Mucosa of descending colon (tissue), 3 donors: ENCODE measurements at regions of chr19 and their contacts with region 1.

Region 1: DNA sequence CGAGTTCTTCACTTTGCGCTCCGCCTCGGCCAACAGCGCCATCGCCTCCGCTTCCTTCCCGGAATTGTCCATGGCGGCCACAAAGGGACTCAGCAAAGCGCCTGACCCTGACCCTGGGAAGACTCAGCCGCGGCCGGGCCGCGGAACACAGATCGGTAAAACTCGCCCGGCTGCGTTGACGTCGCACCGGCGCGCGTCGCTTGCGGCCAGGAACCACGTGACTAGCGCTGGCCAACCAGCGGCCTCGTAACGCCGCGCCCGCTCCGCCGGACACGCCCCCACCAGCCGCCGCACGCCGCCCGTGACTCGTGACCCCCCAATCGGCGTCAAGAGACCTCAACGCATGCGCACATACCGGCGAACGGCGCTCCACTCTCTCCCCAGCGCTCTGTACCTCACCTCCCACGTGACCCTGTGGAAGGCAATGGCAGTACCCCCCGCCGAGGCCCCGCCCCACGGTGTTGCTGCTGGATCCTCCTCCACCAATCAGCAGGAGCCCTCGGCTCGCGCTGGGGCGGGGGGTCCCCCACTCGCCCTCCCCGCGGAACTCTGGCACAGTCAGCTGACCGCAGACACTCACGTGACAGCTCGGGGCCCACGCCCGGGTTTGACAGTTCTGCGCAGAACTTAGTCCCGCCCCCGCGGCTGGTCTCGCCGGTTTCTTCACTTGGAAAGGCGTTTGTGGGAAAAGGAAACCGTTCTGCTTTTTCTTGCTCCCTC is at the start of gene NAPA:
- DNase-seq: peak; percentile 100
- ATAC-seq: peak; percentile 94
- H3K4me3 ChIP-seq: peak within 1 kb of the TSS; percentile 92
- H3K4me1 ChIP-seq: peaks cover 30% of the 10 kb centered on the region
- CTCF ChIP-seq: no peak
- total RNA-seq, gene NAPA: 109 to 145 (median 124) TPM

Region 2: GRCh38 chr19:47436712-47437401 is 78.2 kb before region 1 on chr19:
- intact Hi-C with region 1: no loop called
- DNase-seq: peak; percentile 77 to 92 (median 86)
- ATAC-seq: peak; percentile 98
- H3K4me3 ChIP-seq: no peak overlapping the region
- H3K4me1 ChIP-seq: no peaks in the 10 kb centered on the region
- CTCF ChIP-seq: peak; percentile 65

Region 3: GRCh38 chr19:47600246-47601179 is 85.5 kb after region 1 on chr19:
- intact Hi-C with region 1: loop called in 1 of 2 experiments (anchors 10 kb)
- DNase-seq: peak; percentile 100
- ATAC-seq: peak; percentile 97
- H3K4me3 ChIP-seq: peak overlapping the region; percentile 14
- H3K4me1 ChIP-seq: peaks cover 15% of the 10 kb centered on the region
- CTCF ChIP-seq: no peak

Region 4: DNA sequence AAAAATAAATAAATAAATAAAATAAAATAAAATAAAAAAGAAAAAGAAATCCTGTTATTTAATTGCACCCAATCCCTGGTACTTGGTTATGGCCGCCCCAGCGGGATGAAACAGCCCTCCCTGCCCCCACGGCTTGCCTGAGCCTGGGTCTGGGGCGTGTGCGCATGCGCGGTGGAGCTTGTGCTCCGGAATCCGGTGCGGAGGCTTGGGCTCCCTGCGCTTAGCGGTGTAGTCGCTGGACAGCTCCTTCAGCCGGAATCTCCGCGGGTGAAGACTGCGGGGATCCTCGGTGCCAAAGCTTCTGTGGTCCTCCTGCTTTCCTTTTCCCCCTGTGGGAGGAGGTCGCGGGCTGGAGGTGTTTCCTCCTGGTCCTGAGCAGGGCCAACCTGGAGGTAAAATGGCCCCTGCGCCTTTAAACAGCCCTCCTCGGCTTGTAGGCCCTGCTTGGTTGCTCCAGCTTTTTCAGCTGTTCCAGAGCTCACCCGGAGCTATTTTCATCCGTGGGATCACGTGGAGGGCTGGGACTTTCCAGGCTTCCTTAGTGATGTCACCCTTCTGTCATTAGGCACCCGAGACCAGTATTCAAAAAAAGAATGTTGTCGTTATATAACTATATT is 595.4 kb after region 1 on chr19 and contains the start of gene PLA2G4C:
- intact Hi-C with region 1: no loop called
- DNase-seq: peak; percentile 86 to 88 (median 87)
- ATAC-seq: peak; percentile 81
- H3K4me3 ChIP-seq: no peak within 1 kb of the TSS
- H3K4me1 ChIP-seq: peaks cover 12% of the 10 kb centered on the region
- CTCF ChIP-seq: no peak
- total RNA-seq, gene PLA2G4C: 5.0 to 13.1 (median 7.8) TPM